K562 (cell line): ENCODE measurements at regions of chr13 and their contacts with region 1.

Region 1: DNA sequence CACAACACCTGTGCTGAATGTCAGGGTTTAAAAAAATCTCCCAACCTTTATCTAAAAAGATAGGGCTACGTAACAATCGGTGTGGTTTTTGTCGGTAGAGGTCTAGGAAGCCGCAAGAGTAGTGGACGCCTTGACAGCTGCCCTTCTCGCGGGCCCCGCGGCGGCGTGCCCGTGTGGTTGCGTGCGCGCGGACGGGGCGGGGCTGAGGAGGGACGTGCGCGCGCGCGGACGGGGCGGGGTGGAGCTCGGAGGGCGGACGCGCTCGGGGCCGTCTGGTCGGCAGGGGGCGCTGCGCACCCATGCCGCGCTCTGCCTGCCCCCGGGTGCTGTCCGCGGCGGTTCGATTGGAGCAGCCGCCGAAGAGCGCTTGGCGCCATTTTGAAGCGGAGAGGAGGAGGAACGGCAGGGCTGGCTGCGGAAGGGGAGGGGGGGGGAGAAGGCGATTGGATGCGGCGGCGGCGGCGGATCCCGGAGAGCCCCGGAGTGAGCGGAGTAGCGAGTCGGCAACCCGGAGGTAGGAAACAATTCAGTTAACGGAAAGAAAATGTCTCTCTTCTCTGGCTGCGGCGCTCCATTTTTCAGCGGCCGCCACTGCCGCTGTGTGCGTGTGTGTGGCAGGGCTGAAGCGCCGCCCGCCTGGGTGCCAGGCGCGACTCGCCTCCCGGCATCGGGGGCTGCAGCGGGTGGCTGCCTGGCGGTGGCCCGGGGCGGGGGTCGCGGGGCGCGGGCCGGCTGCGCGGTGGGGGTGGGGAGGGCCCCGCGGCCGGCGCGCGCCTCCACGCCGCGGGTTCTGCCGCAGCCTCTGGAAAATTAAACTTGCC is at the start of gene PDS5B:
- DNase-seq: peak; percentile 88 to 91 (median 90)
- ATAC-seq: peak; percentile 91
- H3K4me3 ChIP-seq: peak within 1 kb of the TSS; percentile 68
- H3K27ac ChIP-seq: peak within 1 kb of the TSS; percentile 85
- H3K4me1 ChIP-seq: peaks cover 2 to 9% of the 10 kb centered on the region in 2 experiments; a peak in 3 of 5 replicates
- H3K27me3 ChIP-seq: no peaks in the 10 kb centered on the region
- CTCF ChIP-seq: peak; percentile 49 to 84 (median 76)
- EP300 ChIP-seq: no peak
- POLR2A ChIP-seq: peak; percentile 68
- RAD21 ChIP-seq: peak; percentile 84 to 90
- polyA plus RNA-seq, gene PDS5B: 6.2 TPM

Region 2: GRCh38 chr13:32639502-32640105 is 53.3 kb after region 1 on chr13:
- CTCF ChIA-PET with region 1: interaction called, 11 read pairs
- POLR2A ChIA-PET with region 1: no interaction called
- in situ Hi-C with region 1: no loop called
- intact Hi-C with region 1: loop called (anchors 1 kb)
- DNase-seq: peak; percentile 13 to 62 (median 19)
- ATAC-seq: peak; percentile 93
- H3K4me3 ChIP-seq: no peak overlapping the region
- H3K27ac ChIP-seq: no peak overlapping the region
- H3K4me1 ChIP-seq: no peaks in the 10 kb centered on the region; a peak in 3 of 5 replicates
- H3K27me3 ChIP-seq: no peaks in the 10 kb centered on the region
- CTCF ChIP-seq: peak; percentile 58 to 70 (median 60)
- EP300 ChIP-seq: no peak
- POLR2A ChIP-seq: no peak
- RAD21 ChIP-seq: peak; percentile 61 to 69

Region 3: GRCh38 chr13:32650705-32651311 is 64.5 kb after region 1 on chr13:
- CTCF ChIA-PET with region 1: interaction called, 3 read pairs
- POLR2A ChIA-PET with region 1: no interaction called
- in situ Hi-C with region 1: loop called (anchors 10 kb)
- intact Hi-C with region 1: loop called (anchors 1 kb)
- DNase-seq: peak; percentile 21 to 68 (median 34)
- ATAC-seq: peak; percentile 87
- H3K4me3 ChIP-seq: no peak overlapping the region
- H3K27ac ChIP-seq: no peak overlapping the region
- H3K4me1 ChIP-seq: no peaks in the 10 kb centered on the region
- H3K27me3 ChIP-seq: no peaks in the 10 kb centered on the region
- CTCF ChIP-seq: peak; percentile 62 to 70 (median 68)
- EP300 ChIP-seq: no peak
- POLR2A ChIP-seq: no peak
- RAD21 ChIP-seq: peak; percentile 24 to 49

Region 4: DNA sequence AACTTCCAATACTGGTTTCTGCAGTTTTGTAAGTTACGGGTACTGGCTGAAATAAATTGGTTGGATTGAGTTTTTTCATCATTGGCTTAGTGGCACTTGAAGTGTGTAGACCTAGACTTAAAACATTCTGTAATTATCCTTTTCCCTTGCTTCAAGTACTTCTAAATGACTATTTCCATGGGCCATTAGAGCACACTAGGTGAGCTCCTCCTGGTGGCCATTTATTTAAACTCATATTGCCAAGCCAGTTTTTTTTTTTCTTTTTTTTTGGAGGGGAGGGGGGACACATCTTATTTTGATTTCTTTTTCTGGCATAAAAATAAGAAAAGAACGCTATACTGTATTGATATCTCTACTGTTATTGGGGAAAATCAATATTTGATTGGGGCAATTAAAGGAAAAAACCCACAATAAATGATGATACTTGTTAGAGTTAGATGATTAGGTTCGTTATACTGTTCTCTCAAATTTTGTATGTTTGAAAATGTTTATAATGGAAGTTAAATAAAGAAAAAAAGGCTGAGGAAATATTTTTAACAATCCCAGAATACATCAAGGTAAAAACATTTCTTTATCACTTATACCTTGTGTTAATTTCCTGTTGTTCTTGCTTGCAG is 82.8 kb after region 1 on chr13:
- CTCF ChIA-PET with region 1: interaction called, 15 read pairs
- POLR2A ChIA-PET with region 1: no interaction called
- in situ Hi-C with region 1: no loop called
- intact Hi-C with region 1: loop called (anchors 5 kb)
- DNase-seq: peak; percentile 22 to 51 (median 26)
- ATAC-seq: peak; percentile 79
- H3K4me3 ChIP-seq: no peak overlapping the region
- H3K27ac ChIP-seq: no peak overlapping the region
- H3K4me1 ChIP-seq: no peaks in the 10 kb centered on the region
- H3K27me3 ChIP-seq: no peaks in the 10 kb centered on the region
- CTCF ChIP-seq: peak; percentile 40 to 68 (median 50); a peak in 4 of 6 replicates
- EP300 ChIP-seq: no peak
- POLR2A ChIP-seq: no peak
- RAD21 ChIP-seq: peak; percentile 22 to 41; a peak in 3 of 4 replicates

Region 5: GRCh38 chr13:32674503-32674902 is 88.2 kb after region 1 on chr13:
- CTCF ChIA-PET with region 1: interaction called, 15 read pairs
- POLR2A ChIA-PET with region 1: no interaction called
- in situ Hi-C with region 1: no loop called
- intact Hi-C with region 1: loop called (anchors 5 kb)
- DNase-seq: no peak
- ATAC-seq: no peak
- H3K4me3 ChIP-seq: no peak overlapping the region
- H3K27ac ChIP-seq: no peak overlapping the region
- H3K4me1 ChIP-seq: no peaks in the 10 kb centered on the region
- H3K27me3 ChIP-seq: no peaks in the 10 kb centered on the region
- CTCF ChIP-seq: no peak
- EP300 ChIP-seq: no peak
- POLR2A ChIP-seq: no peak
- RAD21 ChIP-seq: no peak

Region 6: GRCh38 chr13:32713397-32713796 is 127.1 kb after region 1 on chr13:
- CTCF ChIA-PET with region 1: no interaction called
- POLR2A ChIA-PET with region 1: no interaction called
- in situ Hi-C with region 1: no loop called
- intact Hi-C with region 1: no loop called
- DNase-seq: no peak
- ATAC-seq: no peak
- H3K4me3 ChIP-seq: no peak overlapping the region
- H3K27ac ChIP-seq: no peak overlapping the region
- H3K4me1 ChIP-seq: no peaks in the 10 kb centered on the region
- H3K27me3 ChIP-seq: no peaks in the 10 kb centered on the region
- CTCF ChIP-seq: no peak
- EP300 ChIP-seq: no peak
- POLR2A ChIP-seq: no peak
- RAD21 ChIP-seq: no peak

Region 7: GRCh38 chr13:33542283-33543088 is 956.2 kb after region 1 on chr13:
- CTCF ChIA-PET with region 1: no interaction called
- POLR2A ChIA-PET with region 1: no interaction called
- in situ Hi-C with region 1: no loop called
- intact Hi-C with region 1: loop called (anchors 5 kb)
- DNase-seq: peak; percentile 83 to 93 (median 86)
- ATAC-seq: peak; percentile 97
- H3K4me3 ChIP-seq: peak overlapping the region; percentile 56
- H3K27ac ChIP-seq: peak overlapping the region; percentile 100
- H3K4me1 ChIP-seq: peaks cover 0 to 12% of the 10 kb centered on the region in 2 experiments; a peak in 2 of 5 replicates
- H3K27me3 ChIP-seq: no peaks in the 10 kb centered on the region
- CTCF ChIP-seq: peak; percentile 72 to 81 (median 78)
- EP300 ChIP-seq: no peak
- POLR2A ChIP-seq: peak; percentile 67
- RAD21 ChIP-seq: peak; percentile 79 to 82

Region 8: DNA sequence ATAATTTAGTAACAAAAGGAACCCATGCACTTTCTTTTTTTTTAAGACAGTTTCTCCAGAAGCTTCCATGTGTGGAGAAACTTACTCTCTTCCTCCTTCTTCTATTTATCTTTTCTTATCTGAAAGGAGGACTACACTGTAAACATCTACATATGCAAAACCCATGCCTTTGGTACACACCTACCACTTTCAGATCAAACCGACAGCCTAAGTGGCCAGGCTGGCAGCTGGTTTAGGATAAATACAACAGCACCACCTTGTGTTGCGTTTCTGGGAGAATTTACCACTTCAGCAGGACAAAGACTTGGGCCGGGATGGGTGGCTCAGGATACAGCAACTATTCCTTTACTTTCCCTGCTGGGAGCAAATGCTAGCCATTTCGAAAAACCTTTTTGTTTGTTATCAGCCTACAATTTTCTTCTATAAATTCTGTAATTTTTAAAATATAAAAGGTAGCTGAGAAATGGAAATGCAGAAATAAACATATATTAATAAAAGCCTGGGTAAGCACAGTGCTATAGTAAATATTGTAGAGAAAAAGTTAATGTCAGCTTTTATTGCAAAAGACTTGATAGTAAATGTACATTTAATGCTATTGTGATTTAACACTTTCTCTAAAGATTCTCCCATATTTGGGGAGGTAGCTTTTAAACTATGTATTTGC is 1137.6 kb after region 1 on chr13:
- CTCF ChIA-PET with region 1: interaction called, 3 read pairs
- POLR2A ChIA-PET with region 1: no interaction called
- in situ Hi-C with region 1: no loop called
- intact Hi-C with region 1: loop called (anchors 5 kb)
- DNase-seq: peak; percentile 6 to 59 (median 13)
- ATAC-seq: peak; percentile 86
- H3K4me3 ChIP-seq: no peak overlapping the region
- H3K27ac ChIP-seq: no peak overlapping the region
- H3K4me1 ChIP-seq: no peaks in the 10 kb centered on the region
- H3K27me3 ChIP-seq: no peaks in the 10 kb centered on the region
- CTCF ChIP-seq: peak; percentile 44 to 63 (median 55); a peak in 5 of 6 replicates
- EP300 ChIP-seq: no peak
- POLR2A ChIP-seq: no peak
- RAD21 ChIP-seq: peak; percentile 66 to 81